Dendritic cell treated with granulocyte-macrophage colony-stimulating factor and Interleukin-4, amounts not matched to agents 40 ng/mL and 50 ng/mL, for 4 days (primary cell): ENCODE measurements at regions of chr22 and their contacts with region 1.

Region 1: GRCh38 chr22:21641789-21642583 is at the start of gene SDF2L1:
- H3K4me3 Mint-ChIP-seq: peak within 1 kb of the TSS; percentile 92
- H3K27ac Mint-ChIP-seq: peak within 1 kb of the TSS; percentile 97
- H3K4me1 Mint-ChIP-seq: peaks cover 46% of the 10 kb centered on the region
- H3K27me3 Mint-ChIP-seq: no peaks in the 10 kb centered on the region

Region 2: GRCh38 chr22:21629262-21630149 is 12.5 kb before region 1 on chr22 and contains the start of gene YDJC:
- intact Hi-C with region 1: loop called (anchors 1 kb)
- H3K4me3 Mint-ChIP-seq: peak within 1 kb of the TSS; percentile 91
- H3K27ac Mint-ChIP-seq: peak within 1 kb of the TSS; percentile 90
- H3K4me1 Mint-ChIP-seq: peaks cover 54% of the 10 kb centered on the region
- H3K27me3 Mint-ChIP-seq: no peaks in the 10 kb centered on the region